PC-9 (cell line): ENCODE measurements at regions of chr4 and their contacts with region 1.

Region 1: DNA sequence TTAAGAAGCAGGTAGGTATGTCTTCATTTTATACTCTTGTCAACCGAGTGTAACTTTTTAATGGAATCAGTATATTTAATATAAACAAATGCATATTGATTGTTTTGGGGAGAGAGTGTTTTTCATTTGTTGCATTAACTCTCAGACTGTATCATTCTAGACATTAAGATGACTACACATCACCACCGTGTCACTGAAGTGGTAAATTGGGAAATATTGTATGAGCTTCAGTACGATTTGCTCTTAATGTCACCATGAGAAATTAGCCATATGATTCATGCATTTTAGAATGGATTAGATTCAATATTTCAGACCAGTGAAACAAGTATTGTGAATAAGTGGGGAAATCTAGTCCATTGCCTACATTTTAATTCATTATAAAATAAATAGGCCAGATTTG is 9.7 kb upstream of the MFAP3L start:
- DNase-seq: no peak
- H3K4me3 ChIP-seq: no peak overlapping the region
- H3K27ac ChIP-seq: no peak overlapping the region
- H3K4me1 ChIP-seq: no peaks in the 10 kb centered on the region
- H3K27me3 ChIP-seq: no peaks in the 10 kb centered on the region
- CTCF ChIP-seq: no peak

Region 2: GRCh38 chr4:170047771-170048354 is 12.0 kb after region 1 on chr4:
- CTCF ChIA-PET with region 1: no interaction called
- POLR2A ChIA-PET with region 1: interaction called, 16 read pairs
- intact Hi-C with region 1: no loop called
- DNase-seq: peak in 1 of 2 experiments; percentile 41
- H3K4me3 ChIP-seq: no peak overlapping the region
- H3K27ac ChIP-seq: no peak overlapping the region
- H3K4me1 ChIP-seq: no peaks in the 10 kb centered on the region
- H3K27me3 ChIP-seq: no peaks in the 10 kb centered on the region
- CTCF ChIP-seq: peak; percentile 78